CD8-positive, alpha-beta T cell (primary cell): ENCODE measurements at regions of chr3 and their contacts with region 1.

Region 1: GRCh38 chr3:46059432-46059831 is 32.1 kb upstream of the XCR1 start:
- DNase-seq: no peak
- ATAC-seq: no peak
- H3K4me3 ChIP-seq: no peak overlapping the region
- H3K4me3 Mint-ChIP-seq: no peak overlapping the region
- H3K27ac ChIP-seq: no peak overlapping the region
- H3K27ac Mint-ChIP-seq: no peak overlapping the region
- H3K4me1 ChIP-seq: peaks cover 26% of the 10 kb centered on the region
- H3K4me1 Mint-ChIP-seq: peaks cover 22% of the 10 kb centered on the region
- H3K27me3 ChIP-seq: no peaks in the 10 kb centered on the region
- H3K27me3 Mint-ChIP-seq: no peaks in the 10 kb centered on the region
- CTCF ChIP-seq: no peak

Region 2: GRCh38 chr3:45546716-45547701 is 512.4 kb before region 1 on chr3:
- CTCF ChIA-PET with region 1: no interaction called
- POLR2A ChIA-PET with region 1: no interaction called
- intact Hi-C with region 1: no loop called
- DNase-seq: peak in 4 of 9 experiments; percentile 21 to 41 (median 34)
- ATAC-seq: no peak
- H3K4me3 ChIP-seq: no peak overlapping the region
- H3K4me3 Mint-ChIP-seq: no peak overlapping the region
- H3K27ac ChIP-seq: no peak overlapping the region
- H3K27ac Mint-ChIP-seq: no peak overlapping the region
- H3K4me1 ChIP-seq: no peaks in the 10 kb centered on the region
- H3K4me1 Mint-ChIP-seq: no peaks in the 10 kb centered on the region
- H3K27me3 ChIP-seq: no peaks in the 10 kb centered on the region
- H3K27me3 Mint-ChIP-seq: no peaks in the 10 kb centered on the region
- CTCF ChIP-seq: peak; percentile 38

Region 3: DNA sequence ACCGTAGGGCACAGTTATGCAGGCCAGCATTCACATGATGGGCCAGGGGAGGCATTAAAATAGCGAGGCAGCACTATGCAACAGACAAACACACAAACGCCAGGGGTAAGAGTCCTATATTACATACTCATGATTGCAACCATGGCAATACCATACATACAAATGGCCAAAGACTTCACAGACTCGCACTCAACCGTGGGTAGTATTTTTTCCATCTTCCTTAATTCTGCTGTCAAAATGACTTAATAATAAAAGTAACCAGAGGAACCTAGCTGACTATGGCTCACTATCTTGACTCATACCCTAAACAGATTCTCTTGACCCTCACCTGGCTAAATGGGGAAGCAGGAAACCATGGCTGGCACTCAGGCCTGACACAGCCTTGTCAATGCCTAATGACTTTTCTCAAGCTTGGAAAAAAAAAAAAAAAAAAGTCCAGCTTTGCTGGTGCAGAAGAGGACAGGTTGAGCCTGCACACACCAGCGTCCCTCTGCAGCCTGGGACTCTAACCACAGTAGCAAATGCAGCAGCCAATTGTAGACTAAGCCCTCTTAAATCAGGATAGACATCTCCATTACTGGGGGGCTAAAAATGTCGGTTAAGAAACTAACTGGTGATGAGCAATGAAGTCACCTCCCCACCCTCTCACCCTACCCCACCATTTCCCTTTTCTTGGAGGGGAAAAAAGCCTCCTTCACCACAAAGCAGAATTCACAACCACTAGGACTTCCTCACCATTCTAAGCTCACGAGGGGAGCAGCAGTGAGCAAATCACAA is 894.0 kb after region 1 on chr3:
- CTCF ChIA-PET with region 1: no interaction called
- POLR2A ChIA-PET with region 1: no interaction called
- intact Hi-C with region 1: loop called in 1 of 2 experiments (anchors 5 kb)
- DNase-seq: peak in 2 of 9 experiments; percentile 55 to 75
- ATAC-seq: peak; percentile 39
- H3K4me3 ChIP-seq: peak overlapping the region; percentile 7
- H3K4me3 Mint-ChIP-seq: peak overlapping the region; percentile 51
- H3K27ac ChIP-seq: peak overlapping the region in 1 of 2 experiments; percentile 66
- H3K27ac Mint-ChIP-seq: peak overlapping the region; percentile 82
- H3K4me1 ChIP-seq: peaks cover 86% of the 10 kb centered on the region
- H3K4me1 Mint-ChIP-seq: peaks cover 84% of the 10 kb centered on the region
- H3K27me3 ChIP-seq: no peaks in the 10 kb centered on the region
- H3K27me3 Mint-ChIP-seq: no peaks in the 10 kb centered on the region
- CTCF ChIP-seq: no peak